ENCODE measurements at regions of chr5 and their contacts with region 1.

Region 1: GRCh38 chr5:179678223-179679013 is 2.4 kb downstream of the CBY3 start:
- DNase-seq: peak; percentile 96 to 98 (median 97)
- H3K4me3 ChIP-seq: peak overlapping the region; percentile 48 to 98 (median 85)
- H3K27ac ChIP-seq: peak overlapping the region; percentile 68 to 87
- H3K4me1 ChIP-seq: peaks cover 0 to 34% (median 27%) of the 10 kb centered on the region in 4 experiments
- H3K27me3 ChIP-seq: no peaks in the 10 kb centered on the region

Region 2: DNA sequence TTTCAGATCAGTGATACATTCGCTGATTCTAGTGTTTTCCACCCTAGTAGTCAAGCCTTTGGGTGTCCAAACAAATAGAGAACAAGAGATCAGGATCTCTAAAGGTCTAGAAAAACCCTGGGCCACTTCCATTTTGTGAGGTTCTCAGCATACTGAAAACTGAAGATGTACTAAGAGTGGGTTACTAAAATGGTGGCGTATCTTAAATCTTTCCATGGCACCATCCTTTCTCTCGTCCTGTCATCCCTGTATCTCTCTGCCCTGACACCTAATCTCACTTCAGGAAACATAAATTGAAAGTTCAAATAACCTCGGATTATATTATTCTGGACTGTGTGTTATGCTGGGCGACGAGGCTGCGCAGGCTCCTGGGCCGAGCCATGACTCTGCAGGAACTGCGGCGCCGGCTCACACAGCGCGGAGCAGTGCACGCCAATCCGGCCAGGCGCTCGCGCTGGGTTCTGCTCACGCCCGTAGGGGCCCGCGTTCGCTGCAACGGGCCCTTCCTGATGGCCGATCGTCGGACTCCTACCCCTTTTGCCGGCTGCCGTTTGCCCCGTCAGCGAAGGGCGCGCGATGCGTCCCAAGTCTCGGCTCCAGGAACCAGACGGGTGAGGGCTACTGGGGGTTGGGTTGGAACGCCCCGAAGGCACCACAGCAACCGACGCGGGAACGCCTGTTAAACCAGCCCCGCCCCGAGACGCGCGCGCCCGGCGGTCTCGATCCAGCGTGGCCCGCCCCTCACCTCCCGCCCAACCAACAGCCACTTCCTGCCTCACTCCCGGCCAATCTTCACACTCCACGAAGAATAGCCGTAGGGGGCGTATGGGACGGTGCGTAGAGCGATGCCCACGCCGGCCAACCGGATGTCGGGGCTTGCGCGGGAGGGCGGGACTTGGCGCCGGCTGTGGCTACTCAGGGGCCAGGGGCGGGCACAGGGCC is 19.8 kb after region 1 on chr5:
- CTCF ChIA-PET with region 1: interaction called, 10 read pairs
- POLR2A ChIA-PET with region 1: interaction called, 9 read pairs
- DNase-seq: peak; percentile 99 to 100 (median 100)
- H3K4me3 ChIP-seq: peak overlapping the region; percentile 66 to 100 (median 86)
- H3K27ac ChIP-seq: peak overlapping the region; percentile 99 to 100
- H3K4me1 ChIP-seq: peaks cover 7 to 43% (median 32%) of the 10 kb centered on the region in 4 experiments
- H3K27me3 ChIP-seq: no peaks in the 10 kb centered on the region